HCT116 (cell line): ENCODE measurements at regions of chr4 and their contacts with region 1.

Region 1: DNA sequence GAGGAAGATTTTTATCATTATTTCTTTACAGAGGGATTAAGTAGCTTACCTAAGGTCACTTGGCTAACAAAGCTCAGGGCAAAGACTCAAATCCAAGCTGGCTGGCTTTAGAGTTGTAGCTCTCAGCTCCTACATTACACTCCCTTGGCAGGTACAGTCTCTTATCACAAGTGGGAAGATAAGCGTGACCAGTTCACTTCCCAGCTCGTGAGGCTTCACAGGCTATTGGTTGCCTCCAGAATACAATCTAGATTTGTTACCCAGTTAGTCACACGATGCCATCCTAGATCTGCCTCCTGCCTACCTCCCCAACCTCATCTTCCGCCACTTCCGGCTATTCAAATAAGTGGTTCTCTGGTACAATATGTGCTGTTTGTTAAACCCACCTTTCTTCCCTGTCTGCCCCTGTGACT is 3.7 kb downstream of the MMRN1 start:
- DNase-seq: no peak
- ATAC-seq: no peak
- H3K4me3 ChIP-seq: no peak overlapping the region
- H3K27ac ChIP-seq: no peak overlapping the region
- H3K4me1 ChIP-seq: no peaks in the 10 kb centered on the region
- H3K27me3 ChIP-seq: no peaks in the 10 kb centered on the region
- CTCF ChIP-seq: no peak
- POLR2A ChIP-seq: no peak
- RAD21 ChIP-seq: no peak

Region 2: DNA sequence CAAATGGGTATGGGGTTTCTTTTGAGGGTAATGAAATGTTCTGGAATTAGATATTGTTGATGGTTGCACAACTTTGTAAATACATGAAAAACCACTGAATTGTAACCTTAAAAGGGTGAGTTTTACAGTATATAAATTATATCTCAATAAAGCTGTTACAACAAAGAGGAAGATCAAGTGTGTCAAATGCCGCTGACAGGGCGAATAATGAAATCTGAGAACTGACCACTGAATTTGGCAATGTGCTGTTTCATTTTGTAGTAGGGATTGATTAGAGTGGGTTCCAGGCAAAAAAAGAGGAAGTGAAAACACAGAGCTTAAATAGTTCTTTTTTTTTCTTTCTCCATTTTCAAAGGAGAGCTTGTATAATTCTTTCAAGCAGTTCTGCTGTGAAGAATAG is 1039.6 kb before region 1 on chr4:
- CTCF ChIA-PET with region 1: no interaction called
- POLR2A ChIA-PET with region 1: no interaction called
- RAD21 ChIA-PET with region 1: no interaction called
- intact Hi-C with region 1: no loop called
- DNase-seq: no peak
- ATAC-seq: no peak
- H3K4me3 ChIP-seq: no peak overlapping the region
- H3K27ac ChIP-seq: no peak overlapping the region
- H3K4me1 ChIP-seq: no peaks in the 10 kb centered on the region
- H3K27me3 ChIP-seq: no peaks in the 10 kb centered on the region
- CTCF ChIP-seq: no peak
- POLR2A ChIP-seq: no peak
- RAD21 ChIP-seq: no peak

Region 3: GRCh38 chr4:89482248-89482647 is 416.1 kb before region 1 on chr4:
- CTCF ChIA-PET with region 1: interaction called, 3 read pairs
- POLR2A ChIA-PET with region 1: no interaction called
- RAD21 ChIA-PET with region 1: no interaction called
- intact Hi-C with region 1: loop called (anchors 2 kb)
- DNase-seq: peak; percentile 68
- ATAC-seq: peak; percentile 99
- H3K4me3 ChIP-seq: no peak overlapping the region
- H3K27ac ChIP-seq: no peak overlapping the region
- H3K4me1 ChIP-seq: no peaks in the 10 kb centered on the region
- H3K27me3 ChIP-seq: no peaks in the 10 kb centered on the region
- CTCF ChIP-seq: peak; percentile 31 to 48 (median 33); a peak in 4 of 6 replicates
- POLR2A ChIP-seq: no peak
- RAD21 ChIP-seq: peak; percentile 58

Region 4: GRCh38 chr4:89657931-89658700 is 240.2 kb before region 1 on chr4:
- CTCF ChIA-PET with region 1: interaction called, 5 read pairs
- POLR2A ChIA-PET with region 1: no interaction called
- RAD21 ChIA-PET with region 1: no interaction called
- intact Hi-C with region 1: loop called (anchors 2 kb)
- DNase-seq: peak; percentile 28
- ATAC-seq: peak; percentile 74
- H3K4me3 ChIP-seq: no peak overlapping the region
- H3K27ac ChIP-seq: no peak overlapping the region
- H3K4me1 ChIP-seq: peaks cover 4 to 10% of the 10 kb centered on the region in 2 experiments
- H3K27me3 ChIP-seq: no peaks in the 10 kb centered on the region
- CTCF ChIP-seq: peak; percentile 39 to 60 (median 44); a peak in 4 of 6 replicates
- POLR2A ChIP-seq: no peak
- RAD21 ChIP-seq: peak; percentile 63

Region 5: DNA sequence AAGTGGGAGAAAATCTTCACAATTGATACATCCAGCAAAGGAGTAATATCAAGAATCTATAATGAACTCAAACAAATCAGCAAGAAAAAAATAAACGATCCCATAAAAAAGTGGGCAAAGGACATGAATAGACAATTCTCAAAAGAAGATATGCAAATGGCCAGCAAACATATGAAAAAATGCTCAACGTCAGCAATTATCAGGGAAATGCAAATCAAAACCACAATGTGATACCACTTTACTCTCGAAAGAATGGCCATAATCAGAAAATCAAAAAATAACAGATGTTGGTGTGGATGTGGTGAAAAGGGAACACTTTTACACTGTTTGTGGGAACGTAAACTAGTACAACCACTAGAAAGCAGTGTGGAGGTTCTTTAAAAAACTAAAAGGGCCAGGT is 114.6 kb after region 1 on chr4:
- CTCF ChIA-PET with region 1: no interaction called
- POLR2A ChIA-PET with region 1: no interaction called
- RAD21 ChIA-PET with region 1: no interaction called
- intact Hi-C with region 1: no loop called
- DNase-seq: no peak
- ATAC-seq: no peak
- H3K4me3 ChIP-seq: no peak overlapping the region
- H3K27ac ChIP-seq: no peak overlapping the region
- H3K4me1 ChIP-seq: no peaks in the 10 kb centered on the region
- H3K27me3 ChIP-seq: no peaks in the 10 kb centered on the region
- CTCF ChIP-seq: no peak
- POLR2A ChIP-seq: no peak
- RAD21 ChIP-seq: no peak

Region 6: DNA sequence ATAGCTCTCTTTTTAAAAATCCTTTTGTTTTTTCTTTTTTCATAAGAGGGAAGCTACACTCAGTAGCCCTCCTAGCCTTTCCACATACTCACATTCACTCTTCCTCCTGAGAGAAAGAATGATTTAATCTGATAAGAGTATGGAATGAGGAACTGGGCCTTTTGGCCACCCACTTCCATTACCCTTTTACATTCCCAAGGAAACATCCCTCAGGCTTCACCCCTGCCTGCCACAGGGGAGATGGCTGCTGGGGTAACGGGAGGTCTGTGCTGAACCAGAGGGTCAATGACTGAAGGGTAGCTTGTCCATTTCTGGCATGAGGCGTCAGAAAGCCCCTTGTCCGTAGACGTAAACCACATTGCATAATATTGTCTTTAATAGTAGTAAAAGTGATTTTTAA is 161.7 kb after region 1 on chr4:
- CTCF ChIA-PET with region 1: no interaction called
- POLR2A ChIA-PET with region 1: no interaction called
- RAD21 ChIA-PET with region 1: no interaction called
- intact Hi-C with region 1: no loop called
- DNase-seq: no peak
- ATAC-seq: no peak
- H3K4me3 ChIP-seq: no peak overlapping the region
- H3K27ac ChIP-seq: no peak overlapping the region
- H3K4me1 ChIP-seq: no peaks in the 10 kb centered on the region
- H3K27me3 ChIP-seq: no peaks in the 10 kb centered on the region
- CTCF ChIP-seq: no peak
- POLR2A ChIP-seq: no peak
- RAD21 ChIP-seq: no peak